ENCODE measurements at regions of chr14 and their contacts with region 1.

Region 1: DNA sequence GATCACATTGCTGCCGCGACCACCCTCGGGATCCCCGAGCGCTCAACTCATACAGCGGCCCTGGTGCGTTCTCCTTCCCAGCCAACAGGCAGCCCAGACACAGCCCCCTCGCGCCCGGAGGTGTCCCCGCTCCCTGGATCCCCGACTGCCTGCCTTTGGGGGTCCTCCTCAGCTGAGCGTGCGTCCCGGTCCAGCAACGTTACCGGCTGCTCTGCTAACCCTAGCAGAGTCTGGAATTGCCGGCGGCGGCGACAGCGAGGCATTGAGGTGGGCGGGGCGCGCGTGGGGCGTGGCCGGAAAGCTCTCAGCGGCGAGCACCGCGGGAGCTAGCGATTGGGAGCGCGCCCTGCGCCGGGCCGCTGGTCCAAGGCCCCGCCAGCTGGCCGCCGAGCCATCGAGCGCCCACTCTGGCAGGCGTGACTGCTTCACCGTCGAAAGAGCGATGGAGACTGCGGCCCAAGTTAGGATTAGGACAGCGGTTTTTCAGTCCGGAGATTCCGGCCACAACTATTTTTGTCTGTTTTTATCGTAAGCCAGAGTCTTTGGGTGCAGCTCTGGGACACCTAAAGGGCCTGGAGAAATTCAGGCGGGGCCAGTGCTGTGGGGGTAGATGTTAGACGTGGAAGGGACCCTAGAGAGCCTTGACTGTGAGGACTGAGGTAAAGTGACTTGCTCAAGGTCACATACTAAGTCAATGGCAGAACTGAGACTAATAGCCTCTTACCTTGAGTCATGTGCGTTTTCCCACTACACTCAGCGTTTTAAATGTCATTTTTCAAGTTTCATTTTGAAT is at the start of gene HEATR5A:
- DNase-seq: peak; percentile 94
- H3K4me3 Mint-ChIP-seq: peak within 1 kb of the TSS; percentile 84
- H3K27ac Mint-ChIP-seq: peak within 1 kb of the TSS; percentile 95
- H3K4me1 Mint-ChIP-seq: peaks cover 23% of the 10 kb centered on the region
- H3K27me3 Mint-ChIP-seq: no peaks in the 10 kb centered on the region
- total RNA-seq, gene HEATR5A: 12.8 to 13.0 TPM

Region 2: GRCh38 chr14:31388687-31389413 is 31.7 kb before region 1 on chr14:
- CTCF ChIA-PET with region 1: interaction called, 3 read pairs
- POLR2A ChIA-PET with region 1: interaction called, 3 read pairs
- intact Hi-C with region 1: loop called (anchors 1 kb)
- DNase-seq: peak; percentile 37
- H3K4me3 Mint-ChIP-seq: no peak overlapping the region
- H3K27ac Mint-ChIP-seq: peak overlapping the region; percentile 60
- H3K4me1 Mint-ChIP-seq: peaks cover 28% of the 10 kb centered on the region
- H3K27me3 Mint-ChIP-seq: no peaks in the 10 kb centered on the region

Region 3: GRCh38 chr14:31400031-31400638 is 20.4 kb before region 1 on chr14:
- CTCF ChIA-PET with region 1: interaction called, 5 read pairs
- POLR2A ChIA-PET with region 1: interaction called, 6 read pairs
- intact Hi-C with region 1: loop called (anchors 1 kb)
- DNase-seq: no peak
- H3K4me3 Mint-ChIP-seq: no peak overlapping the region
- H3K27ac Mint-ChIP-seq: peak overlapping the region; percentile 36
- H3K4me1 Mint-ChIP-seq: peaks cover 6% of the 10 kb centered on the region
- H3K27me3 Mint-ChIP-seq: no peaks in the 10 kb centered on the region

Region 4: GRCh38 chr14:31430634-31431264 is 10.2 kb after region 1 on chr14:
- CTCF ChIA-PET with region 1: interaction called, 13 read pairs
- POLR2A ChIA-PET with region 1: no interaction called
- intact Hi-C with region 1: loop called (anchors 1 kb)
- DNase-seq: no peak
- H3K4me3 Mint-ChIP-seq: no peak overlapping the region
- H3K27ac Mint-ChIP-seq: no peak overlapping the region
- H3K4me1 Mint-ChIP-seq: peaks cover 14% of the 10 kb centered on the region
- H3K27me3 Mint-ChIP-seq: no peaks in the 10 kb centered on the region

Region 5: GRCh38 chr14:31449971-31450610 is 29.6 kb after region 1 on chr14:
- CTCF ChIA-PET with region 1: interaction called, 38 read pairs
- POLR2A ChIA-PET with region 1: interaction called, 4 read pairs
- intact Hi-C with region 1: no loop called
- DNase-seq: no peak
- H3K4me3 Mint-ChIP-seq: no peak overlapping the region
- H3K27ac Mint-ChIP-seq: no peak overlapping the region
- H3K4me1 Mint-ChIP-seq: peaks cover 3% of the 10 kb centered on the region
- H3K27me3 Mint-ChIP-seq: no peaks in the 10 kb centered on the region

Region 6: DNA sequence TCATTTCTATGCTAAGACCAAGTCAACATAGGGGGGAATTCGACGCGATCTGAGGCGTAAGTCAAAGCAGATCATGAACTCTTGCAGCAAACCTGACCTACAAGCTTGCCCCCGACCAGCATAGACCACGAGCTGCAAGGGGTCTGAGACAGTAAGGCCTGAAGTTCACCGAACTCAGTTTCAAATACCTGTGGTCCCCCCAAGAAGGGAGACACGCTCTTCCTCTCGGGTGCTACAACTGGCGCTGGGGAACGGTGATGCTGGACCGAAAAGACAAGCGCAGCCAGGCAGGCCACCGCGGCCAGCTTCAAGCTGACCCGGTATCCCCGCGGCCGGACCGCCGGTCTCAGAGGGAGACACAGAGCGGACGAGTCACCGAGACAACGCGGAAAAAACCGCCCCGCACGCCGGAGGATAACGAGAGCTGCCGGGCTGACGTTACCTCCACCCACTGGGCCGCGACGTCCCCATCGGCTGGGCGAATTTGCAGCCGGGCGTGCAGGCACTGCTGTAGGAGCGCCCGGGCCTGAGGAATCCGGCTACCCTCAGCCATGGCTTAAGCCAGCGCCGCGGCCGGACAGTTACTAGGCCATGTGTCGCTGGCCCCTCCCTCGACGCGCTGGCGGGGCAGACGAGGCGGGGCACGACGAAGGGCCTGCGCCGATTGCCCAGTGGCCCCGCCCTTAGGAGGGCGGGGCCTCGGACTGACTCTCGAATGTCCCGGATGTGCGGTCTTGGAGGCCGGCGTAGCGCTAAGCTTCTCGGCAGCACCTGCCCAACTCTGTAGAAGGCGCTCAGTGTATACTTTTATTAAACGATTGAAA is 36.5 kb after region 1 on chr14 and contains the start of gene DTD2:
- CTCF ChIA-PET with region 1: interaction called, 38 read pairs
- POLR2A ChIA-PET with region 1: interaction called, 19 read pairs
- intact Hi-C with region 1: loop called (anchors 1 kb)
- DNase-seq: peak; percentile 94
- H3K4me3 Mint-ChIP-seq: peak within 1 kb of the TSS; percentile 95
- H3K27ac Mint-ChIP-seq: peak within 1 kb of the TSS; percentile 79
- H3K4me1 Mint-ChIP-seq: peaks cover 25% of the 10 kb centered on the region
- H3K27me3 Mint-ChIP-seq: no peaks in the 10 kb centered on the region
- total RNA-seq, gene DTD2: 19.1 to 20.2 TPM

Region 7: GRCh38 chr14:31561155-31561846 is 140.8 kb after region 1 on chr14 and contains the start of gene NUBPL:
- CTCF ChIA-PET with region 1: no interaction called
- POLR2A ChIA-PET with region 1: no interaction called
- intact Hi-C with region 1: loop called (anchors 1 kb)
- DNase-seq: peak; percentile 98
- H3K4me3 Mint-ChIP-seq: peak within 1 kb of the TSS; percentile 95
- H3K27ac Mint-ChIP-seq: peak within 1 kb of the TSS; percentile 93
- H3K4me1 Mint-ChIP-seq: peaks cover 20% of the 10 kb centered on the region
- H3K27me3 Mint-ChIP-seq: peaks cover 1% of the 10 kb centered on the region
- total RNA-seq, gene NUBPL: 6.9 to 9.1 TPM

Region 8: GRCh38 chr14:31777312-31777711 is 356.8 kb after region 1 on chr14:
- CTCF ChIA-PET with region 1: no interaction called
- POLR2A ChIA-PET with region 1: no interaction called
- intact Hi-C with region 1: no loop called
- DNase-seq: no peak
- H3K4me3 Mint-ChIP-seq: no peak overlapping the region
- H3K27ac Mint-ChIP-seq: no peak overlapping the region
- H3K4me1 Mint-ChIP-seq: no peaks in the 10 kb centered on the region
- H3K27me3 Mint-ChIP-seq: no peaks in the 10 kb centered on the region